HEK293T (cell line): ENCODE measurements at regions of chr17 and their contacts with region 1.

Region 1: GRCh38 chr17:17252149-17252661 is 15.2 kb upstream of the FLCN start:
- DNase-seq: no peak

Region 2: DNA sequence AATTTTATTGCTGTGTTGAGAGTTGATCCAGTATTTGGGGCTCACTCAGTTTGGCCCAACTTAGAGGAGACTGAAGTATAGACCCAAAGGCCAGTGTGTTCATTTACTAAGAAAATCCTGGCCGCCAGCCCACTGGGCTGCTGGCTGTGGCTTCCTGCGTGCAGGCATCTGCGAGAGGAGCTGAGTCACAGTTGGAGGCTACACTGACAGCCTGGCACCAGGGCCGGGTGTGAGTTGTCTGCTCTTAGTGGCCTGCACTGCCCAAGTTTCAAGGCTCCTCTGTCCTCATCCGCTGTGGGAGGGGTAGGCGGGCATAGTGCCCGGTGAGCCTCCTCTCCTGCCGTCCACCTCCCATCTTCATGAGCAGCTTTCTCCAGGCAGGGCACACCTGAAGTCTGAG is 100.2 kb before region 1 on chr17:
- CTCF ChIA-PET with region 1: no interaction called
- POLR2A ChIA-PET with region 1: no interaction called
- DNase-seq: no peak

Region 3: DNA sequence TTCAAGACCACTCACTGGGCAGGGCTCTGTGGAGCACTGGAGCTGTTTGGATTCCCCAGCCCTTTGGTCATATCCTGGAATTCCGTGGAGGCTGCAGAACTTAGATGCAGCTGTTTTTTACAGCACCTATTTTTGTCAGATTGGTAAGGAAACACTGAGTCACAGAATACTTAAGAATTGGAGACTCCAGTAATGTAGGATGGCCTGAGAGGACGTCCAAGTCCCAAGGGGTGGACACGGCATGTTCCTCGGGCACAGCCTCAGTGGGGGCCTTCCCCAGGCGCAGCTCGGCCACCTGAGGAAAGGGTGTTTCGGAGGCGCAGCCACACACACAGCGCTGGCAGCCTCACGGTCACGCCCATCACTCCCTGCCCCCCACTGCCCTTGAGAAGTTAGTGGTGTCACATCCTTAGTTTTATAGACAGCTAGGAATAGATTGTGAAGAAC is 60.8 kb before region 1 on chr17:
- CTCF ChIA-PET with region 1: no interaction called
- POLR2A ChIA-PET with region 1: no interaction called
- DNase-seq: no peak

Region 4: DNA sequence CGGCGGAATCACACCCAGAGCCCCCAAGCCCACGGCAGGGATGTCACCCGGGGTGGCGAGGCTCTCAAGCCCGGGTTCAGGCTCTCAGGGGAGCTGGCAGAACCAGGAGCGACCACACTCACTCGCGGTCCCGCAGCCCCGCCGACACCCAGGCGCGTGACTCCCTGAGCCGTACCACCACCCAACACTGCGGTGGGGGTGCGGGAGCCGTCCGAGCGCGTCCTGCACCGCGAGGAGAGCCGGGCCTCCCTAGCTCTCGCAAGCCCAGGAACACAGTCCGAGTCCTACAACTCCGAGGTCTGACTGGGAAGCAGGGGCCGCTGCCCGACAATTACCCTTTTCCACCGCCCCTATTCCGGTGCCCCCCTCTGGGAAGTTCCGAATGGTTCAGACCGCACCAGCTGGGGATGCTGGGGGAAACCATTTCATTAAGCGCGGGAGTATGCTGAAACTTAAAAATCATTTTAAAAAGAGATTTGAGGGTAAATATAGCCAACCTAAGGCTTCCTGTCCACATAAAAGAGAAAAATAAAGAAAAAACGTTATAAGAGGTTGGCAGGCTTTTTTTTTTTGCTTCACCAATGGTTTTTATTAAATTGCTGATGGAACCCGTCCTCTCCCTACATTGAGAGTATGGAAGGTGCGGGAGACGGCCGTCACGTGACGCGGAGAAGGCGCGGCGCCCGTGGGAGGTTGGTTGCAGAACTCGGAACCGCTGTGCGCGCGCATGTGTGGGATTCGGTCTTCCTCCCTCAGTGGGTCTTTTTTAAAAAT is 15.0 kb before region 1 on chr17 and contains the start of gene FLCN:
- CTCF ChIA-PET with region 1: no interaction called
- POLR2A ChIA-PET with region 1: interaction called, 10 read pairs
- DNase-seq: peak; percentile 83

Region 5: GRCh38 chr17:17313350-17313991 is 61.3 kb after region 1 on chr17:
- CTCF ChIA-PET with region 1: no interaction called
- POLR2A ChIA-PET with region 1: no interaction called
- DNase-seq: no peak